ENCODE measurements at regions of chr17 and their contacts with region 1.

Region 1: DNA sequence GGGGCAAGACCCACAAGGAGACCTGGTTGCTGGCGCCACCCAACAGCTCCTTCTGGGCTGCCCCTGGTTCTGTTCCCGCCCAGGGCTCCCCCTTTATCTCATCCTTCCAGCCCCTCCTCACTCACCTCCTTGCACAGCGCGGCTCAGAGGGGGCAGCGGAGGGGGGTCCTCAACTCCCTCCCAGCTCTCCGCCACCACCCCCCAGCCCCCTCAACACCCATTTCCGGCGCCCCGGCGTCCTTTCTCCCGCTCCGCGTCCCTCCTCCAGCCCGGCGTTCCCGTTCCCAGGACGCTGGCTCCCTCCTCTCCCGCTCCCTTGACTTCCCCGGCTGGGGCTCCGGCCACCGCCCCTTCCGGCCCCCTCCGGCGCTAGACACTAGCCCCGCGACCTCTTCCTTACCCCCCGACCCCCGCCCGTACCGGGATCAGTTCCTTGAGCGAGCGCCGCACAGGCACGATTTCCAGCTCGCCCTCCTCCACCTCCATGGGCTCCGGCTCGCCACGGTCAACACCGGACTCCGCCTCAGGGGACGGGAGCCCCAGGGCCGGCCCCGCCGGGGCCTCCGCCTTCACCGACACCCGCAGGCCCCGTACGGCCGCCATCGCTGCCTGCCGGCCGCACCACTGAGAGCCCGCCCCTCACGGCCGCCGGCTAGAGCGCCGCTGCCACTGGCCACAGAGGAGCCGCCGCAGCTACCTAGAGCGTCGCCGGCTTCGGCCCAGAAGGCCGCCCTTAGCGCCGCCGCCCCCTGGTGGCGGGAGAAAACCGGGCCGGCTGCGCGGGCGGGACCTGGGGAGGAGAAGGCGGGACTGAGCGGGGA is at the start of gene NCBP3:
- DNase-seq: peak; percentile 96
- ATAC-seq: peak; percentile 93
- H3K4me3 Mint-ChIP-seq: peak within 1 kb of the TSS; percentile 84
- H3K27ac Mint-ChIP-seq: peak within 1 kb of the TSS; percentile 91
- H3K4me1 Mint-ChIP-seq: peaks cover 19% of the 10 kb centered on the region
- H3K27me3 Mint-ChIP-seq: no peaks in the 10 kb centered on the region
- total RNA-seq, gene NCBP3: 35.9 to 44.6 TPM

Region 2: DNA sequence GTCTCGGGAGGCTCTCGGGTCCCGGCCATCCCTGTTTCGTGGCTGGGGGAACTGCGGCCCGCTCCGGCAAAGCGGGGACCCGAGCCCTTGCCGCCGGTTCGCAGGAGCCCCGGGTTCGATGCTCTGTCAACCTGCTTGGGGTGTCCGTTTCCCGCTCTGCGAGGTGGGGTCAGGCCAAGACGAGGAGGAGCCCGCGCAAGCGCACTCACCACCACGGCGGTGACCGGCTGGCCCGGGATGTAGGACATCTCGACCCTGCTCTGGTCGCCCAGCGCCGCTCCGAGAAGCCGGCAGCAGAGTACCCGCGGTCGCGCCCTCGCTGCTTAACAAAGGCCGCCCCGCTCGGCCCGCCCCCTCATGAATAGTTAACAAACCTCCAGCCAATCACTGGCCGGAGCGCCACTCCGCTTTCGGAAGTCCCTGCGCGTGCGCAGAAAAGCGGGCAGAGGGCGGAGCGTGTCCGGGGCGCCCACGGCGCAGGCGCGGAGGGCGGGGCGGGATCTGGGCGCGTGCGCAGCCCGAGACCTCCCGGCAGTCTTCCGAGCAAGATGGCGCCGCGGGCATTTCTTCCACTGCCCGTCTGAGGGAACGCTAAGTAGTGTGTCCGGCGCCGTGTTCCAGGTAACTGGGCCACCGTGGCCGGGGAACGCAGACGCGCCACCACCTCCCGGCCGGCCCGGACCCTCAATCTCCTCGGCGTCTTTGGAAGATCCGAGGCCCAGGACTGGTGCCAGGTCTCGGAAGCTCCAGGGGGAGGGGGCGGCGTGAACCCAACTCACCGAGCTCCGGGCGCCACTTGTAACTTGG is 177.3 kb before region 1 on chr17 and contains the starts of genes EMC6 and TAX1BP3:
- CTCF ChIA-PET with region 1: interaction called, 3 read pairs
- POLR2A ChIA-PET with region 1: interaction called, 3 read pairs
- intact Hi-C with region 1: loop called in 1 of 2 experiments (anchors 1 kb)
- DNase-seq: peak; percentile 99
- ATAC-seq: peak; percentile 94
- H3K4me3 Mint-ChIP-seq: peak within 1 kb of the TSS; percentile 97
- H3K27ac Mint-ChIP-seq: peak within 1 kb of the TSS; percentile 94
- H3K4me1 Mint-ChIP-seq: peaks cover 21% of the 10 kb centered on the region
- H3K27me3 Mint-ChIP-seq: no peaks in the 10 kb centered on the region
- total RNA-seq, gene EMC6: 43.6 to 44.3 TPM
- total RNA-seq, gene TAX1BP3: 12.0 to 14.6 TPM

Region 3: DNA sequence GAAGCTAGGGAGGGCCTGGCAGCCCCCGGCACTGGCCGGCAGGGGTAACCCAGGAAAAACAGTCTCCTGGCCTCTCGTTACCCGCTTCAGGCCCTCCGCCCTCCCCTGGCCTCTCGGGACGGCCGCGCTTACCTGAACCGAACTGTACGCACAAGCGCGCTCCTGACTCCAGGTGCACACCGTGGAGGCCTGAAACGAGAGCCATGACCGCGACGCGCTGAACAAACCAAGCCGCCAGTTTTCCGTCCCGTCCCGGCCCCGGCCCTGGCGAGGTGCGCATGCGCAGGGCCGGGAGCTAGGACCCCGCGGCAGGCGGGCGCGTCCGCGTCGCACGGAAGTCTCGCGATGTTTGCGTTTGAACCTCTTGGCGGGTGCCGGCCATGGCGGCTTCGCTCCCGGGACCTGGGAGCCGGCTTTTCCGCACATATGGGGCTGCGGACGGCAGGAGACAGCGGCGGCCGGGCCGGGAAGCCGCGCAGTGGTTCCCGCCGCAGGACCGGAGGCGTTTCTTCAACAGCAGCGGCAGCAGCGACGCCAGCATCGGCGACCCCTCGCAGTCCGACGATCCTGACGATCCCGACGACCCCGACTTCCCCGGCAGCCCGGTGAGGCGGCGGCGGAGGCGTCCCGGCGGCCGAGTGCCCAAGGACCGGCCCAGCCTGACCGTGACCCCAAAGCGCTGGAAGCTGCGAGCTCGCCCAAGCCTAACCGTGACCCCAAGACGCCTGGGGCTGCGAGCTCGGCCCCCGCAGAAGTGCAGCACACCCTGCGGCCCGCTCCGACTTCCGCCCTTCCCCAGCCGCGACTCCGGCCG is 122.1 kb before region 1 on chr17 and contains the start of gene HASPIN:
- CTCF ChIA-PET with region 1: interaction called, 6 read pairs
- POLR2A ChIA-PET with region 1: interaction called, 3 read pairs
- intact Hi-C with region 1: loop called in 1 of 2 experiments (anchors 1 kb)
- DNase-seq: peak; percentile 96
- ATAC-seq: peak; percentile 86
- H3K4me3 Mint-ChIP-seq: peak within 1 kb of the TSS; percentile 83
- H3K27ac Mint-ChIP-seq: peak within 1 kb of the TSS; percentile 93
- H3K4me1 Mint-ChIP-seq: peaks cover 58% of the 10 kb centered on the region
- H3K27me3 Mint-ChIP-seq: no peaks in the 10 kb centered on the region
- total RNA-seq, gene HASPIN: 21.0 to 25.2 TPM

Region 4: DNA sequence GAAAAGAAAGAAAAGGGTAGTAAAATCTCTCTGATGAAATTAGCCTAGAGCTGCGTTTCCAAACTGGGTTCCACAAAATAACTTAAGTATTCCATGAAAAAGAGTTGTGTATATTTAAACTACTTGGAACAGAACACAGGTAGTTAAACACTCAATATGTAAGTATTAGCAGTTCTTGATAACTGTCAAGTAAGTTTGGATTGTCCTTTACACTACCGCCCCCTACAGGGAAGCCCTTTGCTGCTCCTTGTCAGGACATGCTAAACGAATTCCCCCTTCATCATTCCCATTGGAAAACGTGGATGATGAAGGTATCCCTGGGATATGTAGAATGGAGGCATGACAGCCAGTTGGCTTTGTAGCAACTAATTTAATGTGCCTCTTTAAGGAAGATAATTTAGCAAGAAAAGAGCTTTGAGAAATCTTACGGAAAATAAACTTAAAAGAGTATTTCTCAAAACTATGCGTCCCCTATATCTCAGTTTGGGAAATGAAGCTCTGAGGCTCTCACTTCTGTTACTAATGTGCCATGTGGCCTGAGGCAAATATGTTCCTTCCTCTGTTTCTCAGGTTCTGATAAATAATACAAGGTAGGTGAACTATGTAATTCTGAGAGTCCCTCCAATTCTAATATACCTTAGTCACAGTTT is 18.6 kb before region 1 on chr17:
- CTCF ChIA-PET with region 1: interaction called, 30 read pairs
- POLR2A ChIA-PET with region 1: no interaction called
- intact Hi-C with region 1: no loop called
- DNase-seq: peak; percentile 83
- ATAC-seq: peak; percentile 73
- H3K4me3 Mint-ChIP-seq: no peak overlapping the region
- H3K27ac Mint-ChIP-seq: no peak overlapping the region
- H3K4me1 Mint-ChIP-seq: peaks cover 2% of the 10 kb centered on the region
- H3K27me3 Mint-ChIP-seq: no peaks in the 10 kb centered on the region

Region 5: DNA sequence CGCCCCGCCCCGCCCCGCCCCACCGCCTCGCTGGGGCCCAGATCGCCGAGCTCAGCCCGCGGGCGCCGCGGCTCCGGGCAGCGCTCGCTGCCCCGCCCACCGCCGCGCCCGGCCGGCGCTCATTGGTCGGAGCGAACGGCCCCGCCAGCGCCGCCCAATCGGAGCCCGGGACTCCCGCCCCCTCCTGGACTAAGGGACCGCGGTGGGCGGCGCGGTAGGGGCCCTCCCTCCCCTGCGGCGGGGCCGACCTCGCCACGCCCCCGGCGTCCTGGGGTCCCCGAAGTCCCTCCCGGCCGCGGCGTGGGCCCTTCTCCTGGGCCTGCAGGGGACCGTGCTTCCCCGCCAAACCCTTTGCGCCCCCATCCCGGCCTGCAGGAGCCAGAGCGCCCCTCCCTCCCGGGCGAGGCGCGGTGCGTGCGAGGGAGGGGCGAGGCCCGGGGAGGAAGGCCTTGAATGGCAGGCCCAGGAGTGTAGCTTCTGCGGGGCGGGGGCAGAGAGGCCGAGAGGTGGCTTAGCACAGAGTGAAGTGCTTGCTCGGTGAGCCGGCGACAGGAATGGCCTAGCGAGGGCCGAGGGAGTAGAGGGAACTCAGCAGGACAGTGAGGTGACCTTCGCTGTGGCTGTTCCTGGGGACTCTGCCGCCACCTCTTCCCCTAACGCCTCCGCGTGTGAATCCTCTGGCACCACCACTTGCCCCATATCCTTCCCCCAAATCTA is 47.3 kb after region 1 on chr17 and contains the start of gene CAMKK1:
- CTCF ChIA-PET with region 1: interaction called, 4 read pairs
- POLR2A ChIA-PET with region 1: no interaction called
- intact Hi-C with region 1: loop called (anchors 1 to 2 kb)
- DNase-seq: peak; percentile 94
- ATAC-seq: peak; percentile 88
- H3K4me3 Mint-ChIP-seq: peak within 1 kb of the TSS; percentile 76
- H3K27ac Mint-ChIP-seq: peak within 1 kb of the TSS; percentile 77
- H3K4me1 Mint-ChIP-seq: peaks cover 36% of the 10 kb centered on the region
- H3K27me3 Mint-ChIP-seq: no peaks in the 10 kb centered on the region
- total RNA-seq, gene CAMKK1: 4.5 to 5.4 TPM

Region 6: GRCh38 chr17:3944485-3945388 is 98.9 kb after region 1 on chr17:
- CTCF ChIA-PET with region 1: no interaction called
- POLR2A ChIA-PET with region 1: no interaction called
- intact Hi-C with region 1: loop called in 1 of 2 experiments (anchors 1 kb)
- DNase-seq: peak; percentile 72
- ATAC-seq: peak; percentile 88
- H3K4me3 Mint-ChIP-seq: no peak overlapping the region
- H3K27ac Mint-ChIP-seq: no peak overlapping the region
- H3K4me1 Mint-ChIP-seq: no peaks in the 10 kb centered on the region
- H3K27me3 Mint-ChIP-seq: no peaks in the 10 kb centered on the region

Region 7: DNA sequence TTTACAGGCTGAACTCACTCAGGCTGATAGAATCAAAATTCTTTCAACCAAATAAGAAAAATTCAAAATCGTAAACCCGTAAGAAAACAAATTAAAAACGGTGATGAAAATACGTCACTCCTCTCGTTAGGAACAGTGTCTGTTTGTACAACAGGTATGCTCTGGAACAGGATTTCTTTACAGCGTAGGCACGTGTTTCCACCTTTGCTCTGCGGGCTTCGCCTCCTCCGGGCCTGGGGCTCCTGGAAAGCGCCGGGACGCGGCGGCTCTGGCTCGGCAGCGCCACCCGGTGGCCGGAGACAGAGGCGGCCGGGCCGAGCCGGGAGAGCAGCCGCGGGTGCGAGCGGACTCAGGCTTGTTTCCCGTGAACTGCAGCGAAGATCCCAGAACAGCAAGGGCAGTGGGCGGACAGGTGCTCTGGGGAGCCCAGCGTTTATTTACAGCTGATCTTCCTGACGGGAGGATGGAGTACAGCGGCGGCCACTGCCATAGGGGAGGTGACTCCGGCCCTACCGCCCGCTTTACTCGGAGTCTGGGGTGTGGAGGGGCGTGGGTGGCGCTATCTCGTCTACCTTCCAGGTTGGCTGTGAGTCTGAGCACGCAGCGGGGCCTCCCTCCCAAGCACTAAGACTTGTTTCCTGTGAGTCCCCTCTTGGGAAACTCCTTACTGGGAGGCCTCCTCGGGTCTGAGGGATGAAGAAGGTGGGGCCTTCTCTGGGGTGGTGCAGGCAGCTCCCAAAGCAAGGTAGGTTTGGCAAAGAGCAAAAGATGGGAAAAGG is 158.9 kb after region 1 on chr17:
- CTCF ChIA-PET with region 1: interaction called, 3 read pairs
- POLR2A ChIA-PET with region 1: no interaction called
- intact Hi-C with region 1: loop called in 1 of 2 experiments (anchors 1 kb)
- DNase-seq: peak; percentile 80
- ATAC-seq: peak; percentile 91
- H3K4me3 Mint-ChIP-seq: no peak overlapping the region
- H3K27ac Mint-ChIP-seq: no peak overlapping the region
- H3K4me1 Mint-ChIP-seq: peaks cover 6% of the 10 kb centered on the region
- H3K27me3 Mint-ChIP-seq: no peaks in the 10 kb centered on the region

Measured in activated CD4-positive, alpha-beta T cell treated with anti-CD3 and anti-CD28 coated beads for 36 hours (primary cell).